ENCODE measurements at regions of chr20 and their contacts with region 1.

Region 1: GRCh38 chr20:47150403-47151152 is 205.9 kb downstream of the ZMYND8 start:
- DNase-seq: no peak
- H3K4me3 ChIP-seq: no peak overlapping the region
- H3K27ac ChIP-seq: no peak overlapping the region
- H3K4me1 ChIP-seq: no peaks in the 10 kb centered on the region
- H3K27me3 ChIP-seq: no peaks in the 10 kb centered on the region
- CTCF ChIP-seq: peak; percentile 51 to 66 (median 65)
- EP300 ChIP-seq: no peak
- POLR2A ChIP-seq: no peak

Region 2: GRCh38 chr20:46757754-46758678 is 392.6 kb before region 1 on chr20:
- intact Hi-C with region 1: loop called (anchors 2 kb)
- DNase-seq: no peak
- H3K4me3 ChIP-seq: no peak overlapping the region
- H3K27ac ChIP-seq: no peak overlapping the region
- H3K4me1 ChIP-seq: peaks cover 0 to 8% (median 5%) of the 10 kb centered on the region in 4 donors
- H3K27me3 ChIP-seq: peaks cover 0 to 6% (median 0%) of the 10 kb centered on the region in 4 donors
- CTCF ChIP-seq: peak in 2 of 3 experiments; percentile 85 to 95
- EP300 ChIP-seq: no peak
- POLR2A ChIP-seq: no peak